ENCODE measurements at regions of chr1 and their contacts with region 1.

Region 1: GRCh38 chr1:156054500-156055280 is at the start of gene LAMTOR2:
- DNase-seq: peak; percentile 86 to 97 (median 94)
- ATAC-seq: peak; percentile 83
- H3K4me3 ChIP-seq: peak within 1 kb of the TSS; percentile 100
- H3K4me3 Mint-ChIP-seq: peak within 1 kb of the TSS; percentile 94
- H3K27ac ChIP-seq: peak within 1 kb of the TSS; percentile 82 to 87
- H3K27ac Mint-ChIP-seq: peak within 1 kb of the TSS; percentile 89
- H3K4me1 ChIP-seq: peaks cover 34% of the 10 kb centered on the region
- H3K4me1 Mint-ChIP-seq: peaks cover 40% of the 10 kb centered on the region
- H3K27me3 ChIP-seq: no peaks in the 10 kb centered on the region
- H3K27me3 Mint-ChIP-seq: no peaks in the 10 kb centered on the region
- CTCF ChIP-seq: no peak
- total RNA-seq, gene LAMTOR2: 7.0 to 8.7 TPM

Region 2: GRCh38 chr1:155277070-155277895 is 777.4 kb before region 1 on chr1 and contains the start of gene HCN3:
- CTCF ChIA-PET with region 1: no interaction called
- POLR2A ChIA-PET with region 1: no interaction called
- intact Hi-C with region 1: loop called in 1 of 2 experiments (anchors 10 kb)
- DNase-seq: peak; percentile 70 to 99 (median 90)
- ATAC-seq: peak; percentile 31
- H3K4me3 ChIP-seq: peak within 1 kb of the TSS; percentile 61
- H3K4me3 Mint-ChIP-seq: peak within 1 kb of the TSS; percentile 82
- H3K27ac ChIP-seq: peak within 1 kb of the TSS; percentile 13 to 29
- H3K27ac Mint-ChIP-seq: peak within 1 kb of the TSS; percentile 65
- H3K4me1 ChIP-seq: peaks cover 35% of the 10 kb centered on the region
- H3K4me1 Mint-ChIP-seq: peaks cover 43% of the 10 kb centered on the region
- H3K27me3 ChIP-seq: no peaks in the 10 kb centered on the region
- H3K27me3 Mint-ChIP-seq: no peaks in the 10 kb centered on the region
- CTCF ChIP-seq: peak; percentile 59
- total RNA-seq, gene HCN3: 1.3 to 1.8 TPM

Region 3: GRCh38 chr1:155884031-155884960 is 170.4 kb before region 1 on chr1:
- CTCF ChIA-PET with region 1: no interaction called
- POLR2A ChIA-PET with region 1: no interaction called
- intact Hi-C with region 1: no loop called
- DNase-seq: no peak
- ATAC-seq: no peak
- H3K4me3 ChIP-seq: no peak overlapping the region
- H3K4me3 Mint-ChIP-seq: no peak overlapping the region
- H3K27ac ChIP-seq: no peak overlapping the region
- H3K27ac Mint-ChIP-seq: no peak overlapping the region
- H3K4me1 ChIP-seq: no peaks in the 10 kb centered on the region
- H3K4me1 Mint-ChIP-seq: no peaks in the 10 kb centered on the region
- H3K27me3 ChIP-seq: no peaks in the 10 kb centered on the region
- H3K27me3 Mint-ChIP-seq: no peaks in the 10 kb centered on the region
- CTCF ChIP-seq: no peak

Region 4: DNA sequence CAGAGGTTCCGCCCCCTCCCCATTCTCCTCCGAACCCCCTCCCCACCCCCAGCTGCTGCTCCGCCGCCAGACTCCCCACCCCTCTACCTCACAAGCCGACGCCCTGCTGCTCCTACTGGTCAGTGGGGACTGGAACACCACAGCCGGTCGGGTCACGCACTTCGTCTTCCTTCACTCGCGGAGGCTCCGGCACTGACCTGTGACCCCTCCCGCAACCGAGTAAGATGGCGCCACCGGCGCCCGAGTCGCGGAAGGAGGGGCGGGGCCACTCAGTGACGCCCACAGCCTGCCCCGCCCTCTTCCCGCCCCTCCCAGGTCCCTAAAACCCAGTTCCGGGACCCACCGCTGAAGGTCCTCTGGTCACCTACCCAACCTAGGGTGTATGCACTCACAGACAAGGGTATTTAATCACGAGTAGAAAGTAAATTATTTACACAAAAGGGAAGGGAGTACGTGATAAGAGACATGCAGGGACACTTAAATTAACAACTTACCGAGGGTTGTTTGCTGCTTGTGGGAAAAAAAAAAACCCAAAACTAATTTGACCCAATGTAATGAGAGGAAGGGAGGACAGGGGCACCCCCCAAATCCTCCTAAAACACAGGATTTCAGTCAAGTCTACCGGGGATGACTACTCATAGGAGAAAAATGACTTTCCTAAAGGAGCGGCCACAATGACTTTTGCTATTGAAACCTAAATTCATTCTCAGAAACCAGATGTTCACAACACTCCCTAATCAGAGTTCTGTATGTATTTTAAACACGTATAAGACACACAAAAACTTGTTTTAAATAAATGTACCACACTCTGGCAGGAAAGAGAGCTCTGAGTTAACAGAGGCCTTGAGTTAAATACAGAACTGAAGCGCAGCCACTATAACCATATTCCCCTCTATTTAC is 143.3 kb before region 1 on chr1 and contains the start of gene RIT1:
- CTCF ChIA-PET with region 1: no interaction called
- POLR2A ChIA-PET with region 1: no interaction called
- intact Hi-C with region 1: loop called in 1 of 2 experiments (anchors 5 kb)
- DNase-seq: peak; percentile 73 to 93 (median 82)
- ATAC-seq: peak; percentile 98
- H3K4me3 ChIP-seq: peak within 1 kb of the TSS; percentile 67
- H3K4me3 Mint-ChIP-seq: peak within 1 kb of the TSS; percentile 100
- H3K27ac ChIP-seq: peak within 1 kb of the TSS; percentile 57 to 60
- H3K27ac Mint-ChIP-seq: peak within 1 kb of the TSS; percentile 90
- H3K4me1 ChIP-seq: peaks cover 25% of the 10 kb centered on the region
- H3K4me1 Mint-ChIP-seq: peaks cover 28% of the 10 kb centered on the region
- H3K27me3 ChIP-seq: no peaks in the 10 kb centered on the region
- H3K27me3 Mint-ChIP-seq: no peaks in the 10 kb centered on the region
- CTCF ChIP-seq: no peak
- total RNA-seq, gene RIT1: 66.2 to 67.0 TPM

Region 5: DNA sequence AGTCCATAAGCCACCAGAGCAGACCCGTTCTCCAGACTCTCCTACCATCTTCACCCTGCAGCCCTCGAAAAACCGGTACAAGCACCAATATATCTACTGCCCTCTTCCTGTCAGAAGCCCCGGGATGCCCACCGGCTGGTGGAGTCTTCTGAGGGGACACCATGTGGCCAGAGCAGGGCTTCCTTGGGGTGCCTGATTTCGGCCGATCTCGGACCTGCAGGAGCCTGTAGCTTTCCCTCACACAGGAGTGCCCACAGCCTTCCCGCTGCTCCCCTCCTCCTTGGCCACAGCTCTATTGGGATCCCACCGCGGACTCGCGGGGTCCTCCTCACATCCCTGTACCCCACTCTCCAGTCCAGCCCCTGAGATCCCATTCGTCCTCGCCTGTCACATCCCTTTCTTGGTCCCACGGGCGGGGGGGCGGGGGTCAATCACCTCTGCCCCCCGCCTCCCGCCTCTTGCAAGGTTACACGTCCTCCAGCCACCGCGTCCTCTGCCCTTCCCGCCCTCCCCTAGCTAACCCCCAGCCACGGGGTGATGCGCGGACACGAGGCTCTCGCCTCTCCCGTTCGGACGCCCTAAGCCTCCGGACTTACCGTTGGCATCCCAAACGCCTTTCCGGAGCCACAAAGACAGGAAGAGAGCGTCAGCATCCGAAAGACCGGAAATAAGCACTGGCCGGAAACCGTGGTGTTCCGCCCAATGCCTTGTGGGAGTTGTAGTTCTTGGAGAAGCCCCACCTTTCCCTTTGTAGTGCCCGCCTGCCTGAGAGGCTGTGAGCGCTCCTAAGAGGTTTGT is 34.2 kb before region 1 on chr1 and contains the start of gene SSR2:
- CTCF ChIA-PET with region 1: interaction called, 16 read pairs
- POLR2A ChIA-PET with region 1: no interaction called
- intact Hi-C with region 1: loop called (anchors 1 to 2 kb)
- DNase-seq: peak; percentile 61 to 94 (median 77)
- ATAC-seq: peak; percentile 99
- H3K4me3 ChIP-seq: peak within 1 kb of the TSS; percentile 78
- H3K4me3 Mint-ChIP-seq: peak within 1 kb of the TSS; percentile 100
- H3K27ac ChIP-seq: peak within 1 kb of the TSS; percentile 38 to 77
- H3K27ac Mint-ChIP-seq: peak within 1 kb of the TSS; percentile 91
- H3K4me1 ChIP-seq: peaks cover 18% of the 10 kb centered on the region
- H3K4me1 Mint-ChIP-seq: peaks cover 41% of the 10 kb centered on the region
- H3K27me3 ChIP-seq: no peaks in the 10 kb centered on the region
- H3K27me3 Mint-ChIP-seq: no peaks in the 10 kb centered on the region
- CTCF ChIP-seq: no peak
- total RNA-seq, gene SSR2: 223 to 225 TPM

Region 6: DNA sequence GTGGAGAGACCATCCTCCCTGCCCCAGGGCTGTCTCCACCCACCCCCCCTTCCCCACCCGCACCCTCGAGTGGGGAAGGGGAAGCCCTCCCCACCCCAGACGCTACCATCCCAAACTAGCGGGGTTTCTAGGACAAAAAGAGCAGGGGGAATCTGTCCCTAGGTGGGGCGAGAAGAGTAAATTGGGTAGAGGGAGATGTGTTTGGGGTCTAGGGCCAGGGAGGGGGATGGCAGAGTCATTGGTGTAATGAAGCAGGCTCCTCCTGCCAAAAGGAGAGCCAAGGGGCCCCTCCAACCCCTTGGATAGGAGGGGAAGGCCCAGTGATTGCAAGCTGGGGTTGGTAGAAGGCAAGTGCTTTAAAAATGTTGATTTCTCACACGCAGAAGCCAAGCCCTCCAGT is 17.6 kb after region 1 on chr1:
- CTCF ChIA-PET with region 1: no interaction called
- POLR2A ChIA-PET with region 1: no interaction called
- intact Hi-C with region 1: no loop called
- DNase-seq: no peak
- ATAC-seq: no peak
- H3K4me3 ChIP-seq: no peak overlapping the region
- H3K4me3 Mint-ChIP-seq: no peak overlapping the region
- H3K27ac ChIP-seq: no peak overlapping the region
- H3K27ac Mint-ChIP-seq: no peak overlapping the region
- H3K4me1 ChIP-seq: no peaks in the 10 kb centered on the region
- H3K4me1 Mint-ChIP-seq: no peaks in the 10 kb centered on the region
- H3K27me3 ChIP-seq: no peaks in the 10 kb centered on the region
- H3K27me3 Mint-ChIP-seq: no peaks in the 10 kb centered on the region
- CTCF ChIP-seq: no peak

Region 7: GRCh38 chr1:156082309-156083091 is 27.8 kb after region 1 on chr1 and contains the start of gene MEX3A:
- CTCF ChIA-PET with region 1: no interaction called
- POLR2A ChIA-PET with region 1: no interaction called
- intact Hi-C with region 1: loop called in 1 of 2 experiments (anchors 1 kb)
- DNase-seq: peak in 13 of 14 experiments; percentile 31 to 73 (median 49)
- ATAC-seq: peak; percentile 90
- H3K4me3 ChIP-seq: peak within 1 kb of the TSS; percentile 75
- H3K4me3 Mint-ChIP-seq: peak within 1 kb of the TSS; percentile 83
- H3K27ac ChIP-seq: no peak within 1 kb of the TSS
- H3K27ac Mint-ChIP-seq: no peak within 1 kb of the TSS
- H3K4me1 ChIP-seq: peaks cover 23% of the 10 kb centered on the region
- H3K4me1 Mint-ChIP-seq: peaks cover 6% of the 10 kb centered on the region
- H3K27me3 ChIP-seq: peaks cover 22 to 33% of the 10 kb centered on the region in 2 experiments
- H3K27me3 Mint-ChIP-seq: peaks cover 48% of the 10 kb centered on the region
- CTCF ChIP-seq: no peak
- total RNA-seq, gene MEX3A: 0.27 to 0.36 TPM

Region 8: DNA sequence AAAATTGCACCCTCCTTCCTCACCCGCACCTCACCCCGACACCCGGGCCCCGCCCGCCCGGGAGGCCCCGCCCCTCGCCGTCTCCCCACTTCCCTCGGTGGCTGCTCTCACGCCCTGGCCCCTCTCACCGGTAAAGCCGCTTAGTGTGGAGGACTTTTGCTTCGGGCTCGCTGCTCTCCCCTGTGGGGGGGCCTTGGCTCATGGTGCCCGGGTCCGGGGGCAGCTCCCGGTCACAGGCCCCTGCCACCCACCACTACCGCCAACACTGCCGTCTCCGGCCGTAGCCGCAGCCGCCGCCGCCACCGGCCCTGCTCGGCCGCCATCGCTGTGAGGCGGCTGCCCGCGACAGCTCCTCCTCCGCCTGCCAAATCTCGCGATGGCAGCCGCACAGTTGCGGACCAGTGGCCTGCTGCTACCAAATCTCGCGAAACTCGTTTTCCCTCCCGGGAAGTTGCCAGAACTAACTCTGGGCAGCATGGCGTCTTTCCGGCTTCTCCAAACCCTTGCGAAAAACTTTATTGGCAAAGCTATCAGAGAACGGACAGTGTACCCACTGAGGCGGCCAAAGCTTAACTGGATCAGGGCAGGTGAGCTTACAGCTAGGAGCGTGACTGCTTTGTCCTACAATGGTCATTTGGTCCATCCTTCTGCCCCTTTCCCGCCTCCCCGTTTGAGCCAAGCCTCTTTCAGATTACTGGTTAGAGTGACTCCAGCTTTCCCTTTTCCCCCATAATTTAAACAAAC is 228.0 kb after region 1 on chr1 and contains the start of gene SMG5:
- CTCF ChIA-PET with region 1: interaction called, 5 read pairs
- POLR2A ChIA-PET with region 1: interaction called, 4 read pairs
- intact Hi-C with region 1: loop called in 1 of 2 experiments (anchors 1 kb)
- DNase-seq: peak; percentile 90 to 99 (median 94)
- ATAC-seq: peak; percentile 94
- H3K4me3 ChIP-seq: peak within 1 kb of the TSS; percentile 79
- H3K4me3 Mint-ChIP-seq: peak within 1 kb of the TSS; percentile 97
- H3K27ac ChIP-seq: peak within 1 kb of the TSS; percentile 82
- H3K27ac Mint-ChIP-seq: peak within 1 kb of the TSS; percentile 86
- H3K4me1 ChIP-seq: peaks cover 36% of the 10 kb centered on the region
- H3K4me1 Mint-ChIP-seq: peaks cover 47% of the 10 kb centered on the region
- H3K27me3 ChIP-seq: no peaks in the 10 kb centered on the region
- H3K27me3 Mint-ChIP-seq: no peaks in the 10 kb centered on the region
- CTCF ChIP-seq: no peak
- total RNA-seq, gene SMG5: 51.6 to 56.1 TPM

Region 9: GRCh38 chr1:156465747-156466365 is 411.2 kb after region 1 on chr1:
- CTCF ChIA-PET with region 1: no interaction called
- POLR2A ChIA-PET with region 1: no interaction called
- intact Hi-C with region 1: no loop called
- DNase-seq: peak in 1 of 14 experiments; percentile 40
- ATAC-seq: no peak
- H3K4me3 ChIP-seq: no peak overlapping the region
- H3K4me3 Mint-ChIP-seq: no peak overlapping the region
- H3K27ac ChIP-seq: no peak overlapping the region
- H3K27ac Mint-ChIP-seq: peak overlapping the region; percentile 61
- H3K4me1 ChIP-seq: peaks cover 13% of the 10 kb centered on the region
- H3K4me1 Mint-ChIP-seq: peaks cover 22% of the 10 kb centered on the region
- H3K27me3 ChIP-seq: no peaks in the 10 kb centered on the region
- H3K27me3 Mint-ChIP-seq: no peaks in the 10 kb centered on the region
- CTCF ChIP-seq: no peak

Region 10: GRCh38 chr1:156767101-156767878 is 712.6 kb after region 1 on chr1 and contains the start of gene PRCC:
- CTCF ChIA-PET with region 1: no interaction called
- POLR2A ChIA-PET with region 1: no interaction called
- intact Hi-C with region 1: loop called in 1 of 2 experiments (anchors 5 kb)
- DNase-seq: peak; percentile 91 to 100 (median 96)
- ATAC-seq: peak; percentile 88
- H3K4me3 ChIP-seq: peak within 1 kb of the TSS; percentile 87
- H3K4me3 Mint-ChIP-seq: no peak within 1 kb of the TSS
- H3K27ac ChIP-seq: peak within 1 kb of the TSS; percentile 96
- H3K27ac Mint-ChIP-seq: no peak within 1 kb of the TSS
- H3K4me1 ChIP-seq: peaks cover 42% of the 10 kb centered on the region
- H3K4me1 Mint-ChIP-seq: peaks cover 37% of the 10 kb centered on the region
- H3K27me3 ChIP-seq: no peaks in the 10 kb centered on the region
- H3K27me3 Mint-ChIP-seq: no peaks in the 10 kb centered on the region
- CTCF ChIP-seq: no peak
- total RNA-seq, gene PRCC: 49.5 to 50.0 TPM

Region 11: DNA sequence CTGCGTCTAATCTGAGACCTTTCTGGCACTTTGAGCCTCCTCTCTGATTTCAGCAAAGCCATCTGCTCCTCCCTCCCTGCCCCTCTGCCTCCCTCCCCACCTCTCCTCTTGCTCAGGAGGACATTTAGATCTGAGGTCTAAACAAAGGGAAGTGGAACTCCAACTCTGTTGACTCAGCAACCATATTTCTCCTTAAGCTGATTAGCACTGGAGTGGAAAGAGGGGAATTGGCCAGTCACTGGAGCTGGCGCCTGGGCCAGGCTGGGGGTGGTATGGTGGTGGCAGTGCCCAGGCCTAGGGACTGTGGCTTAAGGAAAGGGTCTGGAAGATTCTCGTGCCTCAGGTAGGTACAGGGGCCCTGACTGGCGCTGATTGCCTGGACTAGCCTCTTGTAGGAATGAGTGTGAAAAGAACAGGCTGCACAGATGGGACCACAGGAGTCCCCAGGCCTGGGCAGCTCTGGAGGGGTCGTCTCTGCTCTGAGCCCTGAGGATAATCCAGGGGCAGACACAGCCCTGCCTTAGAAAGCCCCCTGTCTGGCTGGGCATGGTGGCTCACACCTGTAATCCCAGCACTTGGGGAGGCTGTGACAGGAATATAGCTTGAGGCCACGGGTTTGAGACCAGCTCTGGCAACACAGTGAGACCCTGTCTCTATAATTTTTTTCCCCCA is 750.0 kb after region 1 on chr1:
- CTCF ChIA-PET with region 1: no interaction called
- POLR2A ChIA-PET with region 1: no interaction called
- intact Hi-C with region 1: no loop called
- DNase-seq: peak in 1 of 14 experiments; percentile 32
- ATAC-seq: no peak
- H3K4me3 ChIP-seq: no peak overlapping the region
- H3K4me3 Mint-ChIP-seq: no peak overlapping the region
- H3K27ac ChIP-seq: peak overlapping the region in 1 of 2 donors; percentile 30
- H3K27ac Mint-ChIP-seq: peak overlapping the region; percentile 65
- H3K4me1 ChIP-seq: peaks cover 65% of the 10 kb centered on the region
- H3K4me1 Mint-ChIP-seq: peaks cover 24% of the 10 kb centered on the region
- H3K27me3 ChIP-seq: no peaks in the 10 kb centered on the region
- H3K27me3 Mint-ChIP-seq: no peaks in the 10 kb centered on the region
- CTCF ChIP-seq: no peak